ENCODE measurements at regions of chr6 and their contacts with region 1.

Region 1: GRCh38 chr6:143060354-143060805 is 309 bp upstream of the AIG1 start:
- DNase-seq: peak; percentile 88
- ATAC-seq: peak; percentile 76
- H3K4me3 ChIP-seq: peak overlapping the region; percentile 68 to 87 (median 85)
- H3K27ac ChIP-seq: peak overlapping the region; percentile 88
- H3K4me1 ChIP-seq: peaks cover 56% of the 10 kb centered on the region
- H3K27me3 ChIP-seq: no peaks in the 10 kb centered on the region; a peak in 1 of 5 replicates
- CTCF ChIP-seq: peak; percentile 78
- EP300 ChIP-seq: 0 out of 4 replicates have a peak, but pooled peaks of 1 of the 2 experiments have one; percentile 33
- POLR2A ChIP-seq: peak; percentile 59 to 69; a peak in 2 of 4 replicates
- RAD21 ChIP-seq: peak; percentile 86

Region 2: DNA sequence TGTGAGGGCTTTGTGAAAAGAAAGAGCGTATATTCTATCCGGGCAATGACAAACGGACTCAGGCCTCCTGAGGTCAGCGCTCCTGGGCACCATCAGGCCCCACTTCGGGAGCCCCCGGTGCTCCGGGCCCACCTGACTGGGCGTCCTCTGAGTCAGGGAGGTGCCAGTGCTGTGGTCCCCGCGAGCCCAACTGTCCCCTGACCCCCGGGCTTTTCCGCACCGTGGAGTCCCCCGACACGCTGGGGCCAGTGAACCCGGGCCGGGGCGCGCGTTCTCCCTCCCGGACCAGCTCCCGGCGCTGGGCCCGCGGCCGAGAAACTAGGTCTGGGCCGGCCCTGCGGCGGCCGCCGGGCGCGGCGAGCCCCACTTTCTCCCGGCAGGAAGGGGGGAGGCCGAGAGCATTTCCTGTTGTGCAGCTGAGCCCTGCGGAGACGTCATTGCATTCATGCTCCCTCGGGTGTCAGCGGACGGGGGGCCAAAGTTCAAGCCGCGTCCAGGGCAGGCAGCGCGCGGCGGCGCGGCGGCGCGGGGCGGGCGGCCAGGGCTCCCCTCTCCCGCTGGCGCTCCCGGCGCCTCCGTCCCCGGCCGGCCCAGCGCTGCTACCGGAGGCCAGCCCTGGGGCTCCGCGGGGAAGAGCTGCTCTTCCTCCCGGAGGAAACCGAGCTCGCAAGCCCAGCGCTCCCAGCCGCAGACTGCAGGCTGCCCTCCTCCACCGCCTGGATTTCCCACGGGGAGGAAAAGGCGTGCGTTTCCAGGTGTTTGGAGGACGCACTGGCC is 133.7 kb before region 1 on chr6:
- CTCF ChIA-PET with region 1: no interaction called
- POLR2A ChIA-PET with region 1: interaction called, 17 read pairs
- in situ Hi-C with region 1: no loop called
- intact Hi-C with region 1: loop called (anchors 5 kb)
- DNase-seq: peak; percentile 93
- ATAC-seq: peak; percentile 97
- H3K4me3 ChIP-seq: peak overlapping the region; percentile 84 to 99 (median 93)
- H3K27ac ChIP-seq: peak overlapping the region; percentile 99
- H3K4me1 ChIP-seq: peaks cover 38% of the 10 kb centered on the region
- H3K27me3 ChIP-seq: no peaks in the 10 kb centered on the region; a peak in 1 of 5 replicates
- CTCF ChIP-seq: no peak
- EP300 ChIP-seq: peak; percentile 57 to 85; a peak in 3 of 4 replicates
- POLR2A ChIP-seq: peak; percentile 84 to 93; a peak in 3 of 4 replicates
- RAD21 ChIP-seq: peak; percentile 83

Region 3: GRCh38 chr6:143107911-143108761 is 47.8 kb after region 1 on chr6:
- CTCF ChIA-PET with region 1: no interaction called
- POLR2A ChIA-PET with region 1: interaction called, 4 read pairs
- in situ Hi-C with region 1: no loop called
- intact Hi-C with region 1: loop called (anchors 1 kb)
- DNase-seq: no peak
- ATAC-seq: no peak
- H3K4me3 ChIP-seq: no peak overlapping the region
- H3K27ac ChIP-seq: peak overlapping the region; percentile 53
- H3K4me1 ChIP-seq: peaks cover 46% of the 10 kb centered on the region
- H3K27me3 ChIP-seq: no peaks in the 10 kb centered on the region
- CTCF ChIP-seq: no peak
- EP300 ChIP-seq: no peak
- POLR2A ChIP-seq: no peak
- RAD21 ChIP-seq: no peak

Region 4: DNA sequence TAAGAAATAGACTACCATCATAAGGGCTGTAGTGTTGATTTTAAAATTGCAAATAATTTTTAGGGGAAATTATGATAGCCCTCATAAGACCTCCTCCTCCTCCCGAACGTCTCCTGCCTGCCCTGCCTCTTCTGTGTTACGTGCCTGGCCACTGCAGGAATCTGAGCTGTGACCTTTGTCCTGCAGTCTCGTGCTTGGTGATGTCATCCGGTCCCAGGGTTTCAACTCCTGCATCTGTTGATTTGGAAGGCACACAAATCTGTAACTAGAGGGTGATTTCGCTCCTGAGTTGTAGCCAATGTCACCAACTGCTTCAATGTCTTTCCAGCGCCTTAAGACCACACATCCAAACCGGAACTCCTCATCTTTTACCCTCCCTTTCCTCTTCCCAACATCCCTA is 163.5 kb after region 1 on chr6:
- CTCF ChIA-PET with region 1: no interaction called
- POLR2A ChIA-PET with region 1: interaction called, 6 read pairs
- in situ Hi-C with region 1: no loop called
- intact Hi-C with region 1: loop called (anchors 5 kb)
- DNase-seq: peak; percentile 81
- ATAC-seq: peak; percentile 92
- H3K4me3 ChIP-seq: no peak overlapping the region
- H3K27ac ChIP-seq: no peak overlapping the region
- H3K4me1 ChIP-seq: peaks cover 17% of the 10 kb centered on the region
- H3K27me3 ChIP-seq: no peaks in the 10 kb centered on the region
- CTCF ChIP-seq: no peak
- EP300 ChIP-seq: peak in 1 of 2 experiments; percentile 59; a peak in 2 of 4 replicates
- POLR2A ChIP-seq: no peak
- RAD21 ChIP-seq: no peak

Region 5: GRCh38 chr6:143397229-143398222 is 337.1 kb after region 1 on chr6:
- CTCF ChIA-PET with region 1: no interaction called
- POLR2A ChIA-PET with region 1: interaction called, 23 read pairs
- in situ Hi-C with region 1: no loop called
- intact Hi-C with region 1: no loop called
- DNase-seq: peak; percentile 99
- ATAC-seq: peak; percentile 90
- H3K4me3 ChIP-seq: peak overlapping the region; percentile 31 to 68 (median 48)
- H3K27ac ChIP-seq: peak overlapping the region; percentile 90
- H3K4me1 ChIP-seq: peaks cover 58% of the 10 kb centered on the region
- H3K27me3 ChIP-seq: no peaks in the 10 kb centered on the region; a peak in 1 of 5 replicates
- CTCF ChIP-seq: no peak
- EP300 ChIP-seq: peak; percentile 95 to 99
- POLR2A ChIP-seq: peak in 1 of 2 experiments; percentile 75; a peak in 2 of 4 replicates
- RAD21 ChIP-seq: no peak; the same call in 1 of the 2 replicates

Region 6: DNA sequence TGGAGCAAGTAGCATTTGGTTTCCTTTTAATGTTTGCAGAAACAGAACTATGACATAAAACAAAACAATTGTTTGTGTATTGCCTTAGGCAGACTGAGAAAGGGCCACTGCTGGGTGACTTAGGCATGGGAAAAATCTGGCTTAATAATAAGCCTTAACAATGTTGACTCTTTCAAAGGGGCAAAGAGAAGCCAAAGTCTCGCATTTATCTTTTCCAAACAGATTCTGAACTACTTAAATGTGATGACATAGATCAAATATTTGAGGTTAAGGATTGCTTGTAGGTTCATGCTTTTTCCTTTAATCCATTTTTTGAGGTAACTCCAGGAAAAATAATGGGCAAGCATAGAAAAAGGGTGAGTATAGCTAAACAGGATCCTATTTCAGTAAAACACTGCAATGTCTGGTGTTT is 350.5 kb after region 1 on chr6:
- CTCF ChIA-PET with region 1: no interaction called
- POLR2A ChIA-PET with region 1: interaction called, 4 read pairs
- in situ Hi-C with region 1: loop called (anchors 10 kb)
- intact Hi-C with region 1: loop called (anchors 5 kb)
- DNase-seq: peak; percentile 95
- ATAC-seq: peak; percentile 75
- H3K4me3 ChIP-seq: no peak overlapping the region; a peak in 1 of 6 replicates
- H3K27ac ChIP-seq: peak overlapping the region; percentile 53
- H3K4me1 ChIP-seq: peaks cover 64% of the 10 kb centered on the region
- H3K27me3 ChIP-seq: no peaks in the 10 kb centered on the region
- CTCF ChIP-seq: no peak
- EP300 ChIP-seq: peak in 1 of 2 experiments; percentile 97; a peak in 2 of 4 replicates
- POLR2A ChIP-seq: no peak
- RAD21 ChIP-seq: no peak